GM10248 (cell line): ENCODE measurements at regions of chr6 and their contacts with region 1.

Region 1: GRCh38 chr6:122839477-122839876 is 50.4 kb downstream of the SMPDL3A start:
- DNase-seq: peak; percentile 67
- CTCF ChIP-seq: peak; percentile 70

Region 2: GRCh38 chr6:122751326-122751725 is 88.2 kb before region 1 on chr6:
- CTCF ChIA-PET with region 1: interaction called, 75 read pairs
- POLR2A ChIA-PET with region 1: no interaction called
- DNase-seq: peak; percentile 29
- CTCF ChIP-seq: no peak

Region 3: DNA sequence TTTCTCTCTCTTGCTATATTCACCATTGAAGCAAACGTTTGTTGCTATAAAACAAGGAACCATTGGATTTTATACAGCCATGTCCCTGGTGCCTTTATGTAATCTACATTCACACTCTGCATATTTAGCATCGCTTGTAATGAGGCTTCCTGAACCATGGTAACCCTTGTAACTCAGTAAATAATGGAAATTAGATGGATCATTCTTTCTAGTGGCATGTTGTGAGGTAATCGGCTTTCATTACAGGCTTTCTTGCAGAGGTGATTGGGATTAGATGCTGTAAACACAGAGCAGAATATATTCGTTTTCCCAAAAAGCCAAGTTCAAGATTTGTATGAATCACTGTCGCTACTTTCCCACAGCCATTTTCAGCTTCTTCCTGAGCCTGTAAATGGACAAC is 14.3 kb before region 1 on chr6:
- CTCF ChIA-PET with region 1: interaction called, 30 read pairs
- POLR2A ChIA-PET with region 1: no interaction called
- DNase-seq: no peak
- CTCF ChIP-seq: no peak

Region 4: DNA sequence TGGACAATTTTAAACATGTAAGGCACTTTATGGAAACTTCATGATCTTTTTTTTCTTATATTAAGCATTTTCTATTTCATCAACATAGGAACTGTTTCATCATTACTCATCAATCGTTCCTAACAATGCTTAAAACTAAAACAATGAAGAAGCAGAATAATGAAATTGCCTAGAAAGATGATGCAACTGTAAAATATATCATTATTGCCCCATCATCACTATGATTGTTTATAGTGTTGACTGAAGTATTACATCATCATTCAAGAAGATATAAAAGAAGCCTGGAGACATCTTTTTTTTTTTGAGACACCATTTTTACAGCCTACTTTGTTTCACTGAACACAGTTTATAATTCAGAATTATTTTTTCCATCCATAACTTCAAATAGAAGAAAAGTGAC is 650.1 kb after region 1 on chr6:
- CTCF ChIA-PET with region 1: no interaction called
- POLR2A ChIA-PET with region 1: no interaction called
- DNase-seq: no peak
- CTCF ChIP-seq: no peak